HEK293 (cell line): ENCODE measurements at regions of chr3 and their contacts with region 1.

Region 1: GRCh38 chr3:33131331-33132018 is 17.7 kb downstream of the CRTAP start:
- H3K4me3 ChIP-seq: no peak overlapping the region
- H3K27ac ChIP-seq: no peak overlapping the region
- H3K4me1 ChIP-seq: no peaks in the 10 kb centered on the region
- CTCF ChIP-seq: no peak

Region 2: GRCh38 chr3:32947789-32948238 is 183.7 kb before region 1 on chr3:
- CTCF ChIA-PET with region 1: interaction called, 10 read pairs
- POLR2A ChIA-PET with region 1: no interaction called
- H3K4me3 ChIP-seq: no peak overlapping the region
- H3K27ac ChIP-seq: no peak overlapping the region
- H3K4me1 ChIP-seq: no peaks in the 10 kb centered on the region
- CTCF ChIP-seq: no peak

Region 3: DNA sequence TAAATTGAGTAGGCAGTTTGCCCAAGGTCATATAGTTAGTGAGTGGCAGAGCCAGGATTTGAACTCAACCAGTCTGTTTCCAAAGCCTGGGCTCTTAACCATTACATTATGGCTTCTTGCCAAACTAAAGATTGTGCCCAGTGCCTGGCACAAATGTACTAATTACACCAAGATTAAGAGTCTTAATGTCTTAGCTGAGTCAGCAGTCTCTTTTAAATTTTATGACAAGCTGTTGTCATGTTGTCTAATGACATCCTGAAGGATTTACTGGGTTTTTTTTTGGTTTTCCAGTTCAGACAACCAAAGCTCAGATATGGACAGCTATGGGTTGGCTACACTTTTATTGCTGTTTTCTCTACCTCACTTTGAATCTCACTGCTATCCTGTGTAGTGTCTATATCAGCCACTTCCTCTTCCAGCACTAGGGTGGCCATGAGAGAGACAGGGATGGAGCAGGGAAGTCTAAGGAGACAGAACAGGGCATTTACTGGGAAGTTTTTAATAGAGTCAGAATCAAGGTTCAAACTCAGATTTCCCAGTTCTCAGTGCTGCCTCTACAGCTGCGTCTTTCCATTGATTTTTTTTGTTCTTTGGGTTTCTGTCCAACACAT is 156.3 kb after region 1 on chr3:
- CTCF ChIA-PET with region 1: no interaction called
- POLR2A ChIA-PET with region 1: no interaction called
- H3K4me3 ChIP-seq: no peak overlapping the region
- H3K27ac ChIP-seq: no peak overlapping the region
- H3K4me1 ChIP-seq: no peaks in the 10 kb centered on the region
- CTCF ChIP-seq: no peak

Region 4: DNA sequence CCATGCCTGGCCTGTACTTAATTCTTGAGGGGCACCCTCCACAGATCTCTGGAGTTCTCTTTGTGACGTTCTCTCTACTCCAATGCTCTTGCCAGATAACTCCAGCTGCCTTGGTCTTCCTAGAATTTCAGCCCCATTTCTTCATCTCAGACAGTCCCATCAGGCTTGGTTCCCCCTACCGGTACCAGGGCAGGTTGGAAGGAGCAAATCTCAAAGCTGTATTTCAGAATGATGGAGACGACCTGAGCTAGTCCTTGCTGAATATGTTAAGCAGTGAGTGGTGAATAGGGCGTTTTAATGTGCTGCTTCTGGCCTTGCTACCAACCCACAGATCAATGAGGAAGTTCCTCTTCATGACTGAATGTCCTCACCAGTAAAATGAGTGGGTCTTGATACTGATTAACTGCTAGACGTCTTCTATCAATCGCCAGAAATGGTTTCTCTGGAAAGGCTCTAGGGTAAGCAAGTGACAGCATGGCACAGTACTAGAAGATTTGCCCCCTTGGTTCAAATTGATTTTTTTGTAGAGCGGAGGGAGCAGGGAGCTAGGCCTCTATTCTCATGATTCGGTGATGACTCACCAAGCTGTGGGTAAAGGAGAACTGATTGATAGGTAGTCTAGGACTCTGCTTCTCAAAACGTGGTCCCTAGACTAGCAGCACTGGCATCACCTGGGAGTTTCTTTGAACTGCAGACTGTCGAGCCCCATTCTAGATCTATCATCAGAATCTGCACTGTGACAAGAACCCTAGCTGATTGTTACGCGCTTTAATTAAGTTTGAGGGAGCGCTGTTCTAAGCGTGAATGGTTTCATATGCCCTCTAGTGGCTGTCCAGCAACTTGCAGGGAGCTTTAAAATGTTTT is 241.0 kb after region 1 on chr3:
- CTCF ChIA-PET with region 1: interaction called, 113 read pairs
- POLR2A ChIA-PET with region 1: interaction called, 8 read pairs
- H3K4me3 ChIP-seq: no peak overlapping the region
- H3K27ac ChIP-seq: no peak overlapping the region
- H3K4me1 ChIP-seq: no peaks in the 10 kb centered on the region
- CTCF ChIP-seq: peak; percentile 21; the same call in 1 of the 2 replicates